Transverse colon (tissue), 4 donors: ENCODE measurements at regions of chr13 and their contacts with region 1.

Region 1: DNA sequence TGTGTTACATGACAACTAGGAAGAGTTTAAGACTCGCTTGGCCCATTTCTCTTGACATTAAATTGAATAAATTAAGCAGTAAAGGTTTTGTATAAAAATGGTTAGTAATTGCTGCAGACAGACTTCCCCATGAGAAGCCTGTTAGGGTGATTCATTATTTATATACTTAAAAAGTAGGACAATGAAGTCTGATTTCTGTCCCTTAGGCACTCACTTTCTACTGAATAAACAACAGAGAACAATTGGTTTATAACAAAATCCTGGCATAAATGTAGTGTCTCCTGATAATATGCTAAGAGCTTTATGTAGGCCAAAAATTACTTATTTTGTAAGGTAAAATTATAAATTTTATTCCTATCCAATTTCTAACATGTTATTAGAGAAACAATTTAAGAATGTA is 2138.5 kb upstream of the PCDH20 start:
- DNase-seq: no peak
- H3K4me3 ChIP-seq: no peak overlapping the region
- H3K27ac ChIP-seq: no peak overlapping the region
- H3K4me1 ChIP-seq: no peaks in the 10 kb centered on the region
- H3K27me3 ChIP-seq: no peaks in the 10 kb centered on the region
- CTCF ChIP-seq: no peak
- EP300 ChIP-seq: no peak
- POLR2A ChIP-seq: no peak

Region 2: GRCh38 chr13:64723724-64724123 is 1169.6 kb after region 1 on chr13:
- in situ Hi-C with region 1: no loop called
- intact Hi-C with region 1: loop called (anchors 10 kb)
- DNase-seq: no peak
- H3K4me3 ChIP-seq: no peak overlapping the region
- H3K27ac ChIP-seq: no peak overlapping the region
- H3K4me1 ChIP-seq: no peaks in the 10 kb centered on the region
- H3K27me3 ChIP-seq: no peaks in the 10 kb centered on the region
- CTCF ChIP-seq: no peak
- EP300 ChIP-seq: no peak
- POLR2A ChIP-seq: no peak